Endothelial cell of umbilical vein (primary cell): ENCODE measurements at regions of chr6 and their contacts with region 1.

Region 1: GRCh38 chr6:26122793-26123674 is 35.8 kb downstream of the HFE start:
- DNase-seq: peak; percentile 97
- H3K4me3 ChIP-seq: peak overlapping the region; percentile 3 to 99 (median 97)
- H3K27ac ChIP-seq: peak overlapping the region; percentile 70
- H3K4me1 ChIP-seq: peaks cover 6% of the 10 kb centered on the region
- H3K27me3 ChIP-seq: no peaks in the 10 kb centered on the region
- CTCF ChIP-seq: no peak
- POLR2A ChIP-seq: peak; percentile 88

Region 2: DNA sequence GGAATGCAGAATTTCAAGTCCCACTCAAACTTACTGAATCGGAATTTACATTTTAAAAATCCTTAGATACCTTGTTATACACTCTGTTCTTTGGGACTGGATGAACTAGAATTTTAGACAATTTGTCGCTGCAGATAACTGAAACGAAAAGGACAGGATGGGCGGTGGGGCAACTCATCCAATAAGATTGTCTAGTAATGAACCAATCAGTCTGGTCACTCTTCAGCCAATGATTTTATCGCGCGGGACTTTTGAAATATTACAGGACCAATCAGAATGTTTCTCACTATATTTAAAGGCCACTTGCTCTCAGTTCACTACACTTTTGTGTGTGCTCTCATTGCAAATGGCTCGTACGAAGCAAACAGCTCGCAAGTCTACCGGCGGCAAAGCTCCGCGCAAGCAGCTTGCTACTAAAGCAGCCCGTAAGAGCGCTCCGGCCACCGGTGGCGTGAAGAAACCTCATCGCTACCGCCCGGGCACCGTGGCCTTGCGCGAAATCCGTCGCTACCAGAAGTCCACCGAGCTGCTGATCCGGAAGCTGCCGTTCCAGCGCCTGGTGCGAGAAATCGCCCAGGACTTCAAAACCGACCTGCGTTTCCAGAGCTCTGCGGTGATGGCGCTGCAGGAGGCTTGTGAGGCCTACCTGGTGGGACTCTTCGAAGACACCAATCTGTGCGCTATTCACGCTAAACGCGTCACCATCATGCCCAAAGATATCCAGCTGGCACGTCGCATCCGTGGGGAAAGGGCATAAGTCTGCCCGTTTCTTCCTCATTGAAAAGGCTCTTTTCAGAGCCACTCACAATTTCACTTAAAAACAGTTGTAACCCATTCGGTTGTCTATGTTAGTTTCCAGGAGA is 77.7 kb before region 1 on chr6:
- CTCF ChIA-PET with region 1: interaction called, 12 read pairs
- POLR2A ChIA-PET with region 1: interaction called, 25 read pairs
- dilution Hi-C with region 1: no loop called
- intact Hi-C with region 1: no loop called
- DNase-seq: peak; percentile 97
- H3K4me3 ChIP-seq: peak overlapping the region; percentile 3 to 62 (median 45)
- H3K27ac ChIP-seq: peak overlapping the region; percentile 92
- H3K4me1 ChIP-seq: peaks cover 19% of the 10 kb centered on the region
- H3K27me3 ChIP-seq: no peaks in the 10 kb centered on the region
- CTCF ChIP-seq: peak in 1 of 2 donors; percentile 23
- POLR2A ChIP-seq: peak; percentile 98

Region 3: GRCh38 chr6:26103770-26104456 is 19.1 kb before region 1 on chr6:
- CTCF ChIA-PET with region 1: interaction called, 4 read pairs
- POLR2A ChIA-PET with region 1: interaction called, 44 read pairs
- dilution Hi-C with region 1: no loop called
- intact Hi-C with region 1: loop called (anchors 1 kb)
- DNase-seq: peak; percentile 97
- H3K4me3 ChIP-seq: peak overlapping the region; percentile 32 to 46 (median 34)
- H3K27ac ChIP-seq: peak overlapping the region; percentile 87
- H3K4me1 ChIP-seq: peaks cover 18% of the 10 kb centered on the region
- H3K27me3 ChIP-seq: peaks cover 0 to 4% of the 10 kb centered on the region in 2 experiments
- CTCF ChIP-seq: peak; percentile 31 to 57
- POLR2A ChIP-seq: peak; percentile 99

Region 4: DNA sequence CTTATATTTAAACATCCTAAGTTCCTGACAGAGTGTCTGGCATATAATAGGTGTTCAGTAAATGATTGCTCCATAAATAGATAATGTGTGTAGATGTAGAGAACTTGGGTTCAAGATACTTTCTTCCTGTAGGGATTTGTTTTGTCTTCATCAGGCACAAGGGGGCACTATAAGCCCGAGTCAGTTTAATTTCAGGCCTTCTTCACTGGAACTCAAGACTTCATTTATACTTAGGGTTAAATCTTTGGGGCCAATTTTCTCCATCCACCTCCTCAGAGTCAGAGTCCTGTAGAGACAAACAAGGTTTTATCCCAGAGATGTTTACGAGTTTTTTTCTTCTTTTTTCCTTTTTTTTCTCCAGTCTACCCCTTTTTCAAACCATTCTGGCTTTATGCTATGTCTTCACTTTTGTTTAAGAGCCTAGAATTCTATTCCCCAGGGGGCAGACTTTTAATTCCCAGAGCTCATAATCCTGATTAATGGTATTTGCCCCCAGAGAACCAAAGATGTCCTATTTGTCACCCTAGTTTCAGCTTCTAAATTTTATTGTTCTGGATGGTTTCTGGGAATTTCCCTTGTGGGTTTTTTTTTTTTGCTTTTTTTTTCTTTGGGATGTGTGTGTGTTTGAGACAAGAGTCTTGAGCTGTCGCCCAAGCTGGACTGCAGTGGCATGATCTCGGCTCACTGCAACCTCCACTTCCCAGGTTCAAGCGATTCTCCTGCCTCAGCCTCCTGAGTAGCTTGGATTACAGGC is 52.6 kb after region 1 on chr6:
- CTCF ChIA-PET with region 1: interaction called, 5 read pairs
- POLR2A ChIA-PET with region 1: interaction called, 7 read pairs
- dilution Hi-C with region 1: no loop called
- intact Hi-C with region 1: loop called (anchors 1 kb)
- DNase-seq: peak; percentile 85
- H3K4me3 ChIP-seq: no peak overlapping the region
- H3K27ac ChIP-seq: no peak overlapping the region
- H3K4me1 ChIP-seq: peaks cover 11% of the 10 kb centered on the region
- H3K27me3 ChIP-seq: no peaks in the 10 kb centered on the region
- CTCF ChIP-seq: peak; percentile 46 to 51
- POLR2A ChIP-seq: no peak

Region 5: DNA sequence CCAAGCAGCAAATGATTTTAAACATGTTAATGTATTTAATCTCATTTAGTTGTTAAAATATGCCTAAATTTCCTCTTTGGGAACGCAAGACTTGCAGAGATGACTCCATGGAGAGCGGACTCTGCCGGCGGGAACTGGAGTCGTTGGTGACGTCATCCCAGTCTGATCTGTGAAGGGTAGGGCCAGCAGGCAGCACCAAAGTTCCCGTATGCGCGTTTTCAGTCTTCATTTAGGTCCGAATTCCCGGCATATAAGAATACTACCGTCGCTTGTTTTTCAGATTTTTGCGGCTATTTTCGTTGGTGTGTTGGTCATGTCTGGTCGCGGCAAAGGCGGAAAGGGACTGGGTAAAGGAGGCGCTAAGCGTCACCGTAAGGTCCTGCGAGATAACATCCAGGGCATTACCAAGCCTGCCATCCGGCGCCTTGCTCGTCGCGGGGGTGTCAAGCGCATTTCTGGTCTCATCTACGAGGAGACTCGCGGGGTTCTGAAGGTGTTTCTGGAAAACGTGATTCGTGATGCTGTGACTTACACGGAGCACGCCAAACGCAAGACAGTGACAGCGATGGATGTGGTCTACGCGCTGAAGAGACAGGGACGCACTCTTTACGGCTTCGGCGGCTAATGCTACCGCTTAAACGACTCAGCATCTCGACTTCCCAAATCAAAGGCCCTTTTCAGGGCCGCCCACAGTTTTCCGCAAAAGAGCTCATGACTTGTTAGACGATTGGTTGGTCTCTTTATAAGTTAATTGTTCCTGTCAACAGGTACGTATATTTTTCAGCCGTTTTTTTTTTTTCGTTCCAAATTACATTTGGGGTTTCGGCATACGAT is 81.5 kb after region 1 on chr6:
- CTCF ChIA-PET with region 1: interaction called, 20 read pairs
- POLR2A ChIA-PET with region 1: interaction called, 107 read pairs
- dilution Hi-C with region 1: no loop called
- intact Hi-C with region 1: loop called (anchors 1 kb)
- DNase-seq: peak; percentile 99
- H3K4me3 ChIP-seq: peak overlapping the region; percentile 37 to 93 (median 86)
- H3K27ac ChIP-seq: peak overlapping the region; percentile 96
- H3K4me1 ChIP-seq: peaks cover 28% of the 10 kb centered on the region
- H3K27me3 ChIP-seq: no peaks in the 10 kb centered on the region
- CTCF ChIP-seq: peak; percentile 18 to 31
- POLR2A ChIP-seq: peak; percentile 99

Region 6: GRCh38 chr6:27146706-27147505 is 1023.9 kb after region 1 on chr6:
- CTCF ChIA-PET with region 1: no interaction called
- POLR2A ChIA-PET with region 1: interaction called, 5 read pairs
- dilution Hi-C with region 1: no loop called
- intact Hi-C with region 1: loop called (anchors 2 kb)
- DNase-seq: peak; percentile 99
- H3K4me3 ChIP-seq: peak overlapping the region in 2 of 3 experiments; percentile 21 to 46
- H3K27ac ChIP-seq: peak overlapping the region; percentile 66
- H3K4me1 ChIP-seq: peaks cover 5% of the 10 kb centered on the region
- H3K27me3 ChIP-seq: peaks cover 0 to 1% of the 10 kb centered on the region in 2 experiments
- CTCF ChIP-seq: no peak
- POLR2A ChIP-seq: peak; percentile 95